ENCODE measurements at regions of chr2 and their contacts with region 1.

Region 1: DNA sequence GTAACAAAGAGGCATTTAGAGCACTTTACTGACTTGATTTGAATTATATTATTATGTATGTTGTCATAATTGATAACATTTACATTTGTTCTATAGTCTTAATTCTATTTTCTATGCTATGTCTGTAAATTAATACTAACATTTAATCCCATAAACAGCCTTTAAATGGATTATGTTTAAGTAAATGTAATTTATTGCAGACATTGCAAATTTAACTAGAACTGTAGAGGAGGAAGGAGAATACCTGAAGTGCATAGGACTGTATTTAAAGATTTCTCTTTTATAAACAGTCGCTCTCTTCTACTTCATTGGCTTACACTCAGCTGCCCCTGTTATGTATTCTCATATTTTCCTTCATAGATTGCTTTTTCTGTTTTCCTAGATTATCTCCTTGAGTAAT is 92.4 kb downstream of the SPAG16 start:
- DNase-seq: no peak
- H3K4me3 ChIP-seq: no peak overlapping the region
- H3K27ac ChIP-seq: no peak overlapping the region
- H3K4me1 ChIP-seq: no peaks in the 10 kb centered on the region
- H3K27me3 ChIP-seq: no peaks in the 10 kb centered on the region
- CTCF ChIP-seq: no peak
- EP300 ChIP-seq: no peak
- POLR2A ChIP-seq: no peak

Region 2: DNA sequence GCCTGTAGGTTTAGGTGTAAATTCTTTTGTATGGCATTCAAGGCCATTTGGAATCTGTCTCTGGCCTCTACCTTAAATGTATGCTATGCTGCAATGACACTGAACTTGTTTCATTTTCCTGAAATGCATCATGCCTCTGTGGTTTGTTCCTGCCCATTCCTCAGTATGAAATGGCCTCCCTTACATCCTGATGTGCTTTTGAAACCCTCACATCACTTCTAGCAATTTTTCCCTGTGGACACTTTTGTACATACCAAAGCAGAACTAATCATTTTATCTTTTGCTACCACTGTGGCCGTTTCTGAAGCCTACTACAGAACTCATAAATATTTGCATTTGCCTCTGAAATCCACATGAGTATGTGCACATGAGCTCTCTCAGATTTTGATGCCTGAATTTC is 1395.2 kb before region 1 on chr2:
- in situ Hi-C with region 1: no loop called
- intact Hi-C with region 1: loop called (anchors 5 kb)
- DNase-seq: no peak
- H3K4me3 ChIP-seq: no peak overlapping the region
- H3K27ac ChIP-seq: no peak overlapping the region
- H3K4me1 ChIP-seq: no peaks in the 10 kb centered on the region
- H3K27me3 ChIP-seq: no peaks in the 10 kb centered on the region
- CTCF ChIP-seq: no peak
- EP300 ChIP-seq: no peak
- POLR2A ChIP-seq: no peak

Region 3: GRCh38 chr2:213316001-213316735 is 60.5 kb before region 1 on chr2:
- in situ Hi-C with region 1: no loop called
- intact Hi-C with region 1: no loop called
- DNase-seq: no peak
- H3K4me3 ChIP-seq: no peak overlapping the region
- H3K27ac ChIP-seq: no peak overlapping the region
- H3K4me1 ChIP-seq: no peaks in the 10 kb centered on the region
- H3K27me3 ChIP-seq: no peaks in the 10 kb centered on the region
- CTCF ChIP-seq: no peak
- EP300 ChIP-seq: no peak
- POLR2A ChIP-seq: no peak